Right lobe of liver (tissue), 6 donors: ENCODE measurements at regions of chr2 and their contacts with region 1.

Region 1: GRCh38 chr2:219073413-219074129 is 12.8 kb upstream of the IHH start:
- DNase-seq: no peak
- ATAC-seq: peak; percentile 74 to 81 (median 78)
- H3K4me3 ChIP-seq: no peak overlapping the region
- H3K27ac ChIP-seq: no peak overlapping the region
- H3K4me1 ChIP-seq: peaks cover 0 to 11% (median 5%) of the 10 kb centered on the region in 4 donors
- H3K27me3 ChIP-seq: no peaks in the 10 kb centered on the region
- CTCF ChIP-seq: peak; percentile 49 to 75 (median 60)
- POLR2A ChIP-seq: no peak

Region 2: DNA sequence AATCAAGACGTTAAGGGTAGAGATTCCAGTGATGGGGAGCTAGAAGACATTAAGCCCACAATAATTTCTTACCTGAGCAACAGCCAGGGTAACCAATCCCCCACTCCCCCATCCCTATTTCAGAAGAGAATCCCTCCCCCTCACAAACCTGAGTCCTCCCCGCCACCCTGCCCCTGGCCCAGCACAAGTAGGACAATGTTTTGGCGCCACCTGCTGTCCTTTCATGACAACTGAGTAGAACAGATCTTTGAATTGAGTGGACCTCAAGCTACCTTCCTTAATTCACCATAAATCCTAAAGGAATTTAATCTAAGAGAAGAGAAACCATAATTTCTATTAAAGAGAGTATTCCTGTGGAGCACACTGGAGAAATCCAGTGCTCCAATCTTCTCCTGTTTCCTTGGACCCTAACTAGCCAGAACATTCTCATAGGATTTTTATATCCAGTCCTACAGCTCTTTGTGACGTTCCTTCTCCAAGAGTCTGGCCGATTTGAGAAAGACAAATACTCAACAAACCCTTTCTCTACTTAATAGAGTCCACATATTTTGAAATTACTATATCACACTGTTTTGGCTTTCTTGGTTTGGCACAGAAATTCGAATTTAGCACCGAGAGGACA is 46.0 kb after region 1 on chr2:
- intact Hi-C with region 1: loop called in 1 of 2 experiments (anchors 5 kb)
- DNase-seq: peak in 2 of 3 donors; percentile 57 to 75
- ATAC-seq: peak; percentile 39 to 65 (median 58)
- H3K4me3 ChIP-seq: no peak overlapping the region
- H3K27ac ChIP-seq: no peak overlapping the region
- H3K4me1 ChIP-seq: peaks cover 0 to 42% (median 20%) of the 10 kb centered on the region in 4 donors
- H3K27me3 ChIP-seq: no peaks in the 10 kb centered on the region
- CTCF ChIP-seq: peak; percentile 54 to 67 (median 66)
- POLR2A ChIP-seq: no peak